CD14-positive monocyte (primary cell): ENCODE measurements at regions of chr1 and their contacts with region 1.

Region 1: GRCh38 chr1:10045480-10046355 is 13.0 kb downstream of the UBE4B start:
- DNase-seq: no peak
- H3K4me3 ChIP-seq: no peak overlapping the region
- H3K4me3 Mint-ChIP-seq: no peak overlapping the region
- H3K27ac ChIP-seq: no peak overlapping the region
- H3K27ac Mint-ChIP-seq: peak overlapping the region in 4 of 7 donors; percentile 3 to 51 (median 28)
- H3K4me1 ChIP-seq: no peaks in the 10 kb centered on the region
- H3K4me1 Mint-ChIP-seq: peaks cover 12% of the 10 kb centered on the region
- H3K27me3 ChIP-seq: no peaks in the 10 kb centered on the region
- H3K27me3 Mint-ChIP-seq: no peaks in the 10 kb centered on the region
- CTCF ChIP-seq: no peak

Region 2: DNA sequence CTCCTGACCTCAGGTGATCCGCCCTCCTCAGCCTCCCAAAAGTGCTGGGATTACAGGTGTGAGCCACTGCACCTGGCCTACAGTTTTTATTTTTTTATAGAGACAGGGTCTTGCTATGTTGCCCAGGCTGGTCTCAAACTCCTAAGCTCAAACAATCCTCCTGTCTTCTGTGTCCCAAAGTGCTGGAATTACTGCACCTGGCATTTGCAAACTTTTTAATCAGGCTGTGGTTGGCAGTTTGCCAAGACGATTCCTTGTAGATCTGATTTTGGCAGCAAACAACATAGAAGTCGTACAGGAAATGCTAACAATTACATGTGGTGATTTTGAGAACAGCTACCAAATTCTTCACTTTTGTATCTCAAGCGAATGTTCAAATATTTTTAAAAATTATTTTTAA is 38.5 kb before region 1 on chr1:
- intact Hi-C with region 1: no loop called
- DNase-seq: no peak
- H3K4me3 ChIP-seq: no peak overlapping the region
- H3K4me3 Mint-ChIP-seq: no peak overlapping the region
- H3K27ac ChIP-seq: no peak overlapping the region
- H3K27ac Mint-ChIP-seq: no peak overlapping the region
- H3K4me1 ChIP-seq: no peaks in the 10 kb centered on the region
- H3K4me1 Mint-ChIP-seq: peaks cover 4% of the 10 kb centered on the region
- H3K27me3 ChIP-seq: no peaks in the 10 kb centered on the region
- H3K27me3 Mint-ChIP-seq: peaks cover 8 to 21% (median 11%) of the 10 kb centered on the region in 3 donors
- CTCF ChIP-seq: no peak

Region 3: GRCh38 chr1:10085061-10085460 is 39.3 kb after region 1 on chr1:
- intact Hi-C with region 1: loop called in 1 of 2 experiments (anchors 5 kb)
- DNase-seq: no peak
- H3K4me3 ChIP-seq: no peak overlapping the region
- H3K4me3 Mint-ChIP-seq: no peak overlapping the region
- H3K27ac ChIP-seq: no peak overlapping the region
- H3K27ac Mint-ChIP-seq: peak overlapping the region in 1 of 7 donors; percentile 69
- H3K4me1 ChIP-seq: no peaks in the 10 kb centered on the region
- H3K4me1 Mint-ChIP-seq: no peaks in the 10 kb centered on the region
- H3K27me3 ChIP-seq: no peaks in the 10 kb centered on the region
- H3K27me3 Mint-ChIP-seq: no peaks in the 10 kb centered on the region
- CTCF ChIP-seq: no peak